Activated CD8-positive, alpha-beta T cell treated with anti-CD3 and anti-CD28 coated beads, Interleukin-2, amount 10 ng/mL, durations not matched to agents 7 days and 5 days (primary cell): ENCODE measurements at regions of chr14 and their contacts with region 1.

Region 1: DNA sequence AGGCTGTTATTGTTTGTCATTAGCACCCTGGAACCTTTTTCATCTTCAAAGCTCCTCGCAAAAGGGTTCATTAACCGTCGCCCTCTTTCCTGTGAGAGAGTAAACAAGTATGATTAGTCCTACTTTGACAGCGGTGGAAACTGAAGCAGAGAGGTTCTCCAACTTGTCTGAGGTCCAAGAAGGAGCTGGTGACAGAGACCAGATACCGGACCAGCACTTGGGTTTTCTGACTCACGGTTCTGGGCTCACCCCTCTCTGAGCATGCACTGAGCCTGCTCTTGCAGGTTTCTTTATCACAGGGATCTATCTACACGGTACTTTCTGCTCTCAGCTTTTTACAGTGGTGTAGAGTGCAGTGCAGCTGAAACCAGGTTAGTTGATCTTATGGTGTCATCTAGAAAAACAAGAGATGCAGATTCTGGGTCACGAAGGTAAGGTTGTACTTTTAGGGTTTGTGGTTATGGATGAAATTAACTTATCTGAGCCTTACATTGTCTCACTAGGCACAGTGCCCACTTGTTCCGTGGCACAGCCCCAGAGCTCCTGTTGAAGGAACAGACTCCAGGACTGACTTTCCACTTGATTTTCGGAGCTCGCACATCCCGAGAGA is 62.1 kb downstream of the PPP2R5C start:
- DNase-seq: peak; percentile 72
- ATAC-seq: peak; percentile 62
- H3K4me3 Mint-ChIP-seq: peak overlapping the region; percentile 69
- H3K27ac Mint-ChIP-seq: peak overlapping the region; percentile 96
- H3K4me1 Mint-ChIP-seq: peaks cover 84% of the 10 kb centered on the region
- H3K27me3 Mint-ChIP-seq: no peaks in the 10 kb centered on the region

Region 2: DNA sequence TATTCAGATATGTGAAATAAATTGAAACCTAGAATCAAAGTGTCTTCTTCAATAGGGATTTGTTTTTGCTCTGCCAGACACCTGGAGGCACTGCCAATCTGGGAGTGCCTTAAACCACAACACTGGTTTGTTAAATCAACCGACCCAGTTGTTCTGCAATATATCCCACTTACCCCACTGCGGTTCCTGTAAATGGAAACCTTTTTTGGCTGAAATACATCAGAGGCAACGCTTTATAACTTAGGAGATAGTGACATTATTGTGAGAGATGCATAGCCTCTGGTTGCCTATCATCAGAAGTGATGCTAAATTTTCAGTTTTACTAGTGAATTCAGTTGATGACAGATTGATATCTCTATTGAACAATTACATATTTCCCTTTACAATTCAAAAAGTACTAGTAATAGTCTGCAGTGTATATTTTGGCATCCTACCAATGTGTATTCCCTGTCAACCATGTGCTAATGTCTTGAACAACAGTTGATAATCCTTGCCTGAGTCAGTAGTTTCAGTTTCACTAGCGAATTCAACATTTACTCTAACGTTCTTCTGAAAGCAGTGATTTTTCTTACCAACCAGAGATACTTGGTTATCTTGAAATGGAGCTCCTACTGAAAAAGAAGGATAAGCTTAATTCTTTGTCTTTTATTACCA is 31.6 kb before region 1 on chr14:
- CTCF ChIA-PET with region 1: no interaction called
- POLR2A ChIA-PET with region 1: interaction called, 15 read pairs
- DNase-seq: no peak
- ATAC-seq: peak; percentile 84
- H3K4me3 Mint-ChIP-seq: peak overlapping the region; percentile 62
- H3K27ac Mint-ChIP-seq: peak overlapping the region; percentile 83
- H3K4me1 Mint-ChIP-seq: peaks cover 11% of the 10 kb centered on the region
- H3K27me3 Mint-ChIP-seq: no peaks in the 10 kb centered on the region

Region 3: DNA sequence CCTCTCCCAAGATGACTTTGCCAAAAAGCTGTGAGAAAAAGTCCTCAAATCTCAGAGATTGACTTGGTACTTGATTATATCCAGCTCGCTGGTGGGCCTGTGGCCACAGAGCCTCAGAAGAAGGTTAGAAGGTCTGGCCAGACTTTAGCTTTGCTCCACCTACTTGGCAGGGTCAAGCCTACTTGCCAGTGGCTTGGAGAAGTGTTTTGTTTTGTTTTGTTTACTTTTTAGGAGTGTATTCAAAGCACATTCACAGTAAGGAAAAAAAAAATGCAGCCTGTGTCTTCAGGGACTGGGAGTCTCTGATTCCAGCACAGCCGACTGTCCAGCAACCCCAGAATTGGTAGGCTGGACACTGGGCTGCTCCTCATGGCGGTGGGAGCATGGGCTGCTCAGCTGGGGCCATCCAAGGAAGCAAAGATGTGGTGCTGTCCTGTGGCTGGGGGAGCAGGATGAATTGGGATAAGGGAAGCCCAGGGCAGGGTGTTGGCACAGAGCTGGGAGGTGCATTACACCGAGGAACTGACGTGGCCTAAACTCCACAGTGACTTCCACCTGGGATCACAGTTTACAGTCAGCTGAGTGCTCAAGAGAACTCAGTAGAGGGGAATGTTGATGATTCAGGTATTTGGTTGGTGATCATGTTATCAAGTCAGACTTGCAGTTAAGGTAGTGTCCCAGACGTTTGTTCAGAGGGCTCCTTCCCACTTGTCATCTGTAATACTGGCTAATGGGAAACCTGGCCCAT is 11.4 kb after region 1 on chr14:
- CTCF ChIA-PET with region 1: interaction called, 9 read pairs
- POLR2A ChIA-PET with region 1: interaction called, 820 read pairs
- DNase-seq: no peak
- ATAC-seq: no peak
- H3K4me3 Mint-ChIP-seq: no peak overlapping the region
- H3K27ac Mint-ChIP-seq: no peak overlapping the region
- H3K4me1 Mint-ChIP-seq: peaks cover 68% of the 10 kb centered on the region
- H3K27me3 Mint-ChIP-seq: no peaks in the 10 kb centered on the region

Region 4: GRCh38 chr14:101843665-101844064 is 20.0 kb after region 1 on chr14:
- CTCF ChIA-PET with region 1: interaction called, 9 read pairs
- POLR2A ChIA-PET with region 1: interaction called, 13 read pairs
- DNase-seq: peak; percentile 70
- ATAC-seq: peak; percentile 74
- H3K4me3 Mint-ChIP-seq: no peak overlapping the region
- H3K27ac Mint-ChIP-seq: peak overlapping the region; percentile 73
- H3K4me1 Mint-ChIP-seq: peaks cover 83% of the 10 kb centered on the region
- H3K27me3 Mint-ChIP-seq: no peaks in the 10 kb centered on the region

Region 5: DNA sequence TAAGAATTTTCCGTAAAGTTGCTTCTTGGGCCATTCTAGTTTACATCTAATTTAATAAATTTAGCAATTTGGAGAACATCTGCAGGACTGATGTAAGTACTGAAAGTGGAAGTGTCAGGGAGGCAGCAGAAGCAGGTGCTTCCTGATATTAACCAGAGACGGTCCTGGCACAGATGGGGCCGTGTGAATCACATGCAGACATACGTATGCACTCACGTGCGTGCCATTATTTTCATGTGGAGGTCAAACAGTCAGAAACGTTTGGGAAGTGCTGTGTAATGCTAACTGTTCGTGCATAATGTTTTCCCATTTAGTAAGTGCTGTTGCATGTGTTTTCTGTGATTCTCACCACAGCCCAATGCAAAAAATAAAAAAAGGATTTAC is 52.9 kb after region 1 on chr14:
- CTCF ChIA-PET with region 1: no interaction called
- POLR2A ChIA-PET with region 1: interaction called, 13 read pairs
- DNase-seq: peak; percentile 76
- ATAC-seq: peak; percentile 96
- H3K4me3 Mint-ChIP-seq: peak overlapping the region; percentile 56
- H3K27ac Mint-ChIP-seq: peak overlapping the region; percentile 51
- H3K4me1 Mint-ChIP-seq: peaks cover 55% of the 10 kb centered on the region
- H3K27me3 Mint-ChIP-seq: no peaks in the 10 kb centered on the region

Region 6: DNA sequence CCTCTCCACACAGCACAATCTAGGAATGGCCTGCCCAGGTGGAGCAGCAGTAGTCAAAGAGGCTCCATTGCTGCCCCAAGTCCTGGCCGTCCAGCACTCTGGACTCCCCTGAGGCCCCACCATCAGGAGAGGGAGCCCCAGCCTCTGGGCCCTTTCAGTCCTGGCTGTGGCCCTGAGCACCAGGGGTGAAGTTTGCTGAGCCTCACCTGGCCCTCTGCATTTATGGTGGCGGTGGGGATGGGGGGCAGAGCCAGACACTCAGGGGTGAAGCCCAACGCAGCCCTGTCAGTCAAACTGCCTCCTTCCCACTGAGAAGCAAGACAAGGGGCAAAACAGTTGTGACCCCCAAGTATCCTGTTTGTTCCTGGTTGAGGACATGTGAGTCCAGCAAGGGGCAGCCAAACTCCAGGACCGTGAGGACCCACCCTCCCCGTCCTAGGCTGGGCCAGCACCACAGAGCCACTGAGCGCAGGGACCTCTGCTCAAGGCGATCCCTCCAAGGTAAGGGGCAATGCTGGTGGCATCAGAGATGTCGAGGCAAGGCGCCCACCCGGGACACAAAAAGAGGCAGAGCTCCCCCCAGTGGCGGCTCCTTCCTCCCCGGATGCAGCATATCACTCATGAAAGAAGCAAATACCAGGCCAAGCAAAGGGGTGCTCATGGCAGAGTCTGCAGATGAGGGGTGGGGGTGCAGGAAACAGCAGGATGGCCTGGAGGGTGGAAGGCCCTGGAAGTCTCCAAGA is 1094.0 kb after region 1 on chr14:
- CTCF ChIA-PET with region 1: no interaction called
- POLR2A ChIA-PET with region 1: no interaction called
- DNase-seq: peak; percentile 77
- ATAC-seq: peak; percentile 50
- H3K4me3 Mint-ChIP-seq: no peak overlapping the region
- H3K27ac Mint-ChIP-seq: peak overlapping the region; percentile 56
- H3K4me1 Mint-ChIP-seq: peaks cover 9% of the 10 kb centered on the region
- H3K27me3 Mint-ChIP-seq: no peaks in the 10 kb centered on the region